CD4-positive, alpha-beta memory T cell (primary cell): ENCODE measurements at regions of chr4 and their contacts with region 1.

Region 1: GRCh38 chr4:101347557-101348366 is 436 bp upstream of the PPP3CA start:
- DNase-seq: peak; percentile 97 to 99 (median 98)
- H3K4me3 ChIP-seq: peak overlapping the region; percentile 96 to 99
- H3K4me3 Mint-ChIP-seq: peak overlapping the region; percentile 93 to 99 (median 97)
- H3K27ac ChIP-seq: peak overlapping the region; percentile 81
- H3K27ac Mint-ChIP-seq: peak overlapping the region; percentile 95 to 98 (median 96)
- H3K4me1 ChIP-seq: peaks cover 33% of the 10 kb centered on the region
- H3K4me1 Mint-ChIP-seq: peaks cover 24 to 39% (median 34%) of the 10 kb centered on the region in 4 donors
- H3K27me3 ChIP-seq: no peaks in the 10 kb centered on the region
- H3K27me3 Mint-ChIP-seq: peaks cover 0 to 5% of the 10 kb centered on the region in 2 donors

Region 2: GRCh38 chr4:100093091-100093866 is 1254.5 kb before region 1 on chr4:
- CTCF ChIA-PET with region 1: no interaction called
- POLR2A ChIA-PET with region 1: interaction called, 4 read pairs
- intact Hi-C with region 1: loop called (anchors 10 kb)
- DNase-seq: peak; percentile 87 to 97 (median 91)
- H3K4me3 ChIP-seq: no peak overlapping the region
- H3K4me3 Mint-ChIP-seq: peak overlapping the region in 4 of 8 donors; percentile 12 to 61 (median 36)
- H3K27ac ChIP-seq: no peak overlapping the region
- H3K27ac Mint-ChIP-seq: peak overlapping the region; percentile 78 to 96 (median 96)
- H3K4me1 ChIP-seq: peaks cover 13% of the 10 kb centered on the region
- H3K4me1 Mint-ChIP-seq: peaks cover 9 to 28% (median 15%) of the 10 kb centered on the region in 4 donors
- H3K27me3 ChIP-seq: no peaks in the 10 kb centered on the region
- H3K27me3 Mint-ChIP-seq: no peaks in the 10 kb centered on the region

Region 3: GRCh38 chr4:101187841-101188240 is 159.9 kb before region 1 on chr4:
- CTCF ChIA-PET with region 1: interaction called, 5 read pairs
- POLR2A ChIA-PET with region 1: interaction called, 3 read pairs
- intact Hi-C with region 1: loop called (anchors 2 kb)
- DNase-seq: peak in 3 of 5 donors; percentile 8 to 14 (median 10)
- H3K4me3 ChIP-seq: no peak overlapping the region
- H3K4me3 Mint-ChIP-seq: peak overlapping the region in 4 of 8 donors; percentile 12 to 48 (median 22)
- H3K27ac ChIP-seq: no peak overlapping the region
- H3K27ac Mint-ChIP-seq: no peak overlapping the region
- H3K4me1 ChIP-seq: peaks cover 11% of the 10 kb centered on the region
- H3K4me1 Mint-ChIP-seq: peaks cover 24 to 53% (median 31%) of the 10 kb centered on the region in 4 donors
- H3K27me3 ChIP-seq: no peaks in the 10 kb centered on the region
- H3K27me3 Mint-ChIP-seq: no peaks in the 10 kb centered on the region

Region 4: DNA sequence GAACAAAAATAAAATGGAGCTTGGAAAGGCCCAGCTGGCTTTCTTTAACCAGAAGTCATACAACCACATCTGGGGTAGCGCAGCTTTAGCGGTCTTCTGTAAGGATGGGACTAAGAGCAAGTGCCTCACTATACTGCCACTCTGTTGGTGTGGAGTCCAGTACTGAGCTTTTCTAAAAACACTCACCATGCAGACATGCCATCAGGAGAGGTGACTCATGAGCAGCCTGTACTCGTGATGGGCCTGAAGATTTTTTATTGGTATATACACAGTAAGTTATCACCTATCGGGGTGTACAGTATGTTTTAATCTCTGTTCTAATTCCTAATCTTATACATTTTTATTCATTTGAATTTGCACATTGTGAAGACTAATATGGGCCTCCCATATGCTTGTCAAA is 10.1 kb before region 1 on chr4:
- CTCF ChIA-PET with region 1: interaction called, 16 read pairs
- POLR2A ChIA-PET with region 1: interaction called, 23 read pairs
- intact Hi-C with region 1: loop called (anchors 1 kb)
- DNase-seq: no peak
- H3K4me3 ChIP-seq: no peak overlapping the region
- H3K4me3 Mint-ChIP-seq: peak overlapping the region in 1 of 8 donors; percentile 18
- H3K27ac ChIP-seq: no peak overlapping the region
- H3K27ac Mint-ChIP-seq: peak overlapping the region in 4 of 7 donors; percentile 66 to 80 (median 69)
- H3K4me1 ChIP-seq: peaks cover 62% of the 10 kb centered on the region
- H3K4me1 Mint-ChIP-seq: peaks cover 50 to 80% (median 68%) of the 10 kb centered on the region in 4 donors
- H3K27me3 ChIP-seq: no peaks in the 10 kb centered on the region
- H3K27me3 Mint-ChIP-seq: no peaks in the 10 kb centered on the region

Region 5: GRCh38 chr4:102620697-102621497 is 1273.1 kb after region 1 on chr4:
- CTCF ChIA-PET with region 1: no interaction called
- POLR2A ChIA-PET with region 1: no interaction called
- intact Hi-C with region 1: loop called (anchors 5 kb)
- DNase-seq: peak in 2 of 5 donors; percentile 27 to 35
- H3K4me3 ChIP-seq: no peak overlapping the region
- H3K4me3 Mint-ChIP-seq: peak overlapping the region in 1 of 8 donors; percentile 40
- H3K27ac ChIP-seq: no peak overlapping the region
- H3K27ac Mint-ChIP-seq: peak overlapping the region in 5 of 7 donors; percentile 20 to 82 (median 80)
- H3K4me1 ChIP-seq: peaks cover 18% of the 10 kb centered on the region
- H3K4me1 Mint-ChIP-seq: peaks cover 19 to 70% (median 40%) of the 10 kb centered on the region in 4 donors
- H3K27me3 ChIP-seq: no peaks in the 10 kb centered on the region
- H3K27me3 Mint-ChIP-seq: no peaks in the 10 kb centered on the region

Region 6: DNA sequence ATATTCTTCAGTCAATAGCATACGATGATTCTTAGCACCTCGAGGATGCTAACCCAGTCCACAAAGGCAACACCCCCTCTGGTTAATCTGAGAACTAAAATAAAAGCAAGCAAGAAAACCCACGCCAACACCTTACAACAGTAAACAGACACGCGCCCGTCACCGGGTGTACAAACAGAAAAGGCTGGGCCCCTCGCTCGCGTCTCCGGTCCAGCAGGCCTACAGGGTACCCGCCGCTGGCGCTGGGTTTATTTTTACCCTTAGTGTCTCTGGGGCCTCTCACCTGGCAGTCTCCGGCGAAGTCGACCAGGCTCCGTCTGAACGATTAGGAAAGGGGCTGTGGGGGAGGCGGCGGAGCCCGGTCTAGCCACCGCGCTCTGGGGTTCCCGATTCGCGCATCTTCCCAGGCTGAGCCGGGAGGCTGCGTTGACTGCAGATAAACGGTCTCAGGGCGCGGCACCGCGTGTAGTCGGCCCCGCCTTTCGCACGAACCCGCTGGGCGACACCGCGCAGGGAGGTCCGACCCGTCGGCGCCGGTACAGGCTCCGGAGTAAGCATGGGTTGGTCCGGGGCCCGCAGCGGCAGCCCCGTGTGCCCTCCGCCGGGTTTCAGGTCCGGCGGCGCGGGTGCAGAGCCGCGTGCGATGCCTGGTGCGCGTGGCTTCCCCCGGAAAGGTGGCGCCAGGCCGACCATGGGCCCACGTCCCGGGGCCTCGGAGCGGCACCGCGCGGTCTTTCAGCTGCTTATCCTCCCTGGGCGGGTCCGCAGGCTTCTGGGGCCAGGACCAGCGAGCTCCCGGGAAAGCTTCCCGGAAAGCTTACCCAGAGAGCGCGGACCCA is 1728.4 kb after region 1 on chr4:
- CTCF ChIA-PET with region 1: no interaction called
- POLR2A ChIA-PET with region 1: no interaction called
- intact Hi-C with region 1: loop called (anchors 5 kb)
- DNase-seq: peak; percentile 72 to 79 (median 76)
- H3K4me3 ChIP-seq: peak overlapping the region; percentile 26 to 72
- H3K4me3 Mint-ChIP-seq: peak overlapping the region; percentile 94 to 98 (median 98)
- H3K27ac ChIP-seq: peak overlapping the region; percentile 78
- H3K27ac Mint-ChIP-seq: peak overlapping the region; percentile 98 to 99 (median 99)
- H3K4me1 ChIP-seq: peaks cover 37% of the 10 kb centered on the region
- H3K4me1 Mint-ChIP-seq: peaks cover 24 to 58% (median 38%) of the 10 kb centered on the region in 4 donors
- H3K27me3 ChIP-seq: no peaks in the 10 kb centered on the region
- H3K27me3 Mint-ChIP-seq: no peaks in the 10 kb centered on the region